ENCODE measurements at regions of chr10 and their contacts with region 1.

Region 1: GRCh38 chr10:132637477-132638129 is 100.0 kb downstream of the INPP5A start:
- DNase-seq: peak; percentile 21
- ATAC-seq: peak; percentile 66
- H3K4me3 Mint-ChIP-seq: no peak overlapping the region
- H3K27ac Mint-ChIP-seq: no peak overlapping the region
- H3K4me1 Mint-ChIP-seq: peaks cover 15% of the 10 kb centered on the region
- H3K27me3 Mint-ChIP-seq: no peaks in the 10 kb centered on the region

Region 2: GRCh38 chr10:132387764-132388210 is 249.8 kb before region 1 on chr10:
- CTCF ChIA-PET with region 1: no interaction called
- POLR2A ChIA-PET with region 1: no interaction called
- intact Hi-C with region 1: loop called in 1 of 2 experiments (anchors 5 kb)
- DNase-seq: peak; percentile 88
- ATAC-seq: peak; percentile 57
- H3K4me3 Mint-ChIP-seq: peak overlapping the region; percentile 62
- H3K27ac Mint-ChIP-seq: peak overlapping the region; percentile 71
- H3K4me1 Mint-ChIP-seq: peaks cover 3% of the 10 kb centered on the region
- H3K27me3 Mint-ChIP-seq: no peaks in the 10 kb centered on the region

Region 3: DNA sequence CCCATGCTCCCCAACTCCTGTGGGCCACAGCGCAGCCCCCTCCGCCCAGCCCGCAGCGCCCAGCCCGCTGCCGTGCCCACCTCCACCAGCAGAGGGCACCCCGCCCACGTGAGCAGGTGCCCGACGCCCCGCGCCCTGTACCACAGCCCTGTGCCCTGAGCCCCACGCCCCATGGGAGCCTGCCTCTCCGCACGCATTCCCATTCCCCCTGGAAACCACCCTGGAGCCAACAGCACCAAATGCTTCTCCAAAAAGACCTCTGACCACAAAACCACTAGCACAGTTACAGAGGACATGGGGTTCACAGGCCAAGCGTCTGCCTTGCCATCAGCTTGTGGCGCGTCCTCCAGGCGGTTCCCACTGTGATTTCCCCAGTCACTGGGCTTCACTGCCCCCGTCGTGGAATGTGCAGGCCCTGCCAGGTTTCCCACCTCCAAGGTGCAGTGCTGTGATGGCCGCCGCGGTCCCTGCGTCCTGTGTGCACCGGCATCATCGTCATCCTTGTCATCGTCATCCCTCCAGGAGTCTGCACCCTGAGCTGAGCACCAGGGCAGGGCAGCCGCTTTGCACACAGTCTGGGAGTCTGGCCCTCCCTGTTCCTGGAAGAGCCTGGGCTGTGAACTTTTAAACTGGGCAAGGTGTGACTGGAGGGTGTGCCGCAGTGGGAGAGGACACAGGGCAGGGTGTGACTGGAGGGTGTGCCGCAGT is 178.9 kb before region 1 on chr10:
- CTCF ChIA-PET with region 1: interaction called, 11 read pairs
- POLR2A ChIA-PET with region 1: no interaction called
- intact Hi-C with region 1: loop called (anchors 1 kb)
- DNase-seq: peak; percentile 79
- ATAC-seq: peak; percentile 86
- H3K4me3 Mint-ChIP-seq: no peak overlapping the region
- H3K27ac Mint-ChIP-seq: no peak overlapping the region
- H3K4me1 Mint-ChIP-seq: peaks cover 2% of the 10 kb centered on the region
- H3K27me3 Mint-ChIP-seq: no peaks in the 10 kb centered on the region

Measured in activated CD4-positive, alpha-beta T cell treated with anti-CD3 and anti-CD28 coated beads for 36 hours (primary cell).